Activated CD4-positive, alpha-beta T cell treated with anti-CD3 and anti-CD28 coated beads, Interleukin-2, amount 10 ng/mL, durations not matched to agents 24 days and 14 days (primary cell): ENCODE measurements at regions of chr7 and their contacts with region 1.

Region 1: DNA sequence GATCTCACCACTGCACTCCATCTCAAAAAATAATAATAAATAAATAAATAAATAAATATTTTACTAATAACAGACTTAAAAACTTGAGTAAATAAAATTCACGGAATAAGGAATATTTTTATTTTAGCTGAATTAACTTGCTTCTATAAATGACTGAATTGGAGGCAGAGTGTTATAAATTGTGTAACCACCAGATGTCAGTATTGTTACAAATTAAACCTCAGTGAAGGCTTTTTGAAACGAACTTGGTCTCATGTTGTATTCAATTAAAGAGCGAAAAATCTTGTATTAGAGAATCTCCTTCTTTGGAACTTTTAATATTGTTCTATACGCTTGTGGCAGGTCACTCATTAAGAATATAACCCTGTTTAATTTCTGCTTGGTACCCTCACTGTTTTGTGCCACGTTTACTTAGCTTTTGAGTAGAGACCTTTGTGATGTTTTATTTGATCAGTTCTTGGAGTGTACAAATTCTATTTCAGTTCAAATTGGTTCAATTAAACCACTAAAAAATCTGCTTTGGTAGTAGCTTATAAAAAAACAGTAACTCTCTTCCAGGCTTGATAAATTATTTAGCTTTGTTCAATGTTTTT is 45.6 kb upstream of the SCIN start:
- DNase-seq: no peak
- H3K4me3 Mint-ChIP-seq: no peak overlapping the region
- H3K27ac Mint-ChIP-seq: no peak overlapping the region
- H3K4me1 Mint-ChIP-seq: no peaks in the 10 kb centered on the region
- H3K27me3 Mint-ChIP-seq: peaks cover 14% of the 10 kb centered on the region

Region 2: DNA sequence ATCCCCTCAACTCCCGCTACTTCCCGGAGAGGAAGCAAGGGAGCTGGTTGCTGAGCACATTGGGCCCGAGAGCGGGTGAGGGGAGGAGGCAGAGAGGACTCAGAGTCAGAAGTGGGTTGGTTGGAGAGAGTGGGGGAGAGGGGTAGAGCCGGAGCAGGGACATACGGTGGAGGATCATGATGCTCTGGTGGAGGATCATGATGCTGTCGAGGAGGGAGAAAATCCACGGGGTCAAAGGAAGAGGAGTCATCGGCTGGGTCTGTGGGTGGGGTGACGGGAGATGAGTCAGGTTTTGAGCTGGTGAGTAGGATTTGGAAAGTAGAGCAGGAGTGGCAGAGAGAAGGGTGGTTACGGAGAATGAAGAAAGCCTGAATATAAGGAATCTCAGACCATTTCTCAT is 69.2 kb after region 1 on chr7:
- intact Hi-C with region 1: no loop called
- DNase-seq: no peak
- H3K4me3 Mint-ChIP-seq: no peak overlapping the region
- H3K27ac Mint-ChIP-seq: no peak overlapping the region
- H3K4me1 Mint-ChIP-seq: no peaks in the 10 kb centered on the region
- H3K27me3 Mint-ChIP-seq: peaks cover 2% of the 10 kb centered on the region

Region 3: DNA sequence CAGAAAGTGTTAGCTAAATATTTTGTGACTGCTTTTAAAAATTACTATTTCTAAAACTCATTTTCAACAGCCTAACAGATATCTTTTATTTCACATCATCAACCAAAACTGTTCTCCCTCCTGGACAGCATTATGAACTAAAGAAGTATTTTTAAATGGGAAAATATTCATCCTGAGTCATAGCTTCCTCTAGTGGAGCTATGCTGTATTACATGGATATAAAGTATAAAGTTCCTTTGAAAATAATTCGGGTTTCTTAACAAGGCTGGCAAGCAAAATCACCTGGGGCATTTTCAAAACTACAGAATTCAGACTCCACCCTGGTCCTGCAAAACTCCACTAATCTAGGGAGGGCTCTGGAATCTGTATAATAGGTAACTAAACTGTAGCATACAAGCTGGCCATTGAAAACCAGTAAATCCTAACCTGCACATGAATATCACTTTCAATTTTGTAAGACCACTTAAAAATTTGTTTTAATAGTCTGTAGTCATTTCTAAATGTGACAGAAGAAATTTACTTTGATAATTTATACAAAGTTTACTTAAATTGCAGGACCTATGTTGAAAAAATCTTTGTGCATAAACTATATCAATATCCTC is 99.1 kb after region 1 on chr7:
- intact Hi-C with region 1: loop called (anchors 1 kb)
- DNase-seq: no peak
- H3K4me3 Mint-ChIP-seq: no peak overlapping the region
- H3K27ac Mint-ChIP-seq: no peak overlapping the region
- H3K4me1 Mint-ChIP-seq: peaks cover 4% of the 10 kb centered on the region
- H3K27me3 Mint-ChIP-seq: peaks cover 17% of the 10 kb centered on the region

Region 4: DNA sequence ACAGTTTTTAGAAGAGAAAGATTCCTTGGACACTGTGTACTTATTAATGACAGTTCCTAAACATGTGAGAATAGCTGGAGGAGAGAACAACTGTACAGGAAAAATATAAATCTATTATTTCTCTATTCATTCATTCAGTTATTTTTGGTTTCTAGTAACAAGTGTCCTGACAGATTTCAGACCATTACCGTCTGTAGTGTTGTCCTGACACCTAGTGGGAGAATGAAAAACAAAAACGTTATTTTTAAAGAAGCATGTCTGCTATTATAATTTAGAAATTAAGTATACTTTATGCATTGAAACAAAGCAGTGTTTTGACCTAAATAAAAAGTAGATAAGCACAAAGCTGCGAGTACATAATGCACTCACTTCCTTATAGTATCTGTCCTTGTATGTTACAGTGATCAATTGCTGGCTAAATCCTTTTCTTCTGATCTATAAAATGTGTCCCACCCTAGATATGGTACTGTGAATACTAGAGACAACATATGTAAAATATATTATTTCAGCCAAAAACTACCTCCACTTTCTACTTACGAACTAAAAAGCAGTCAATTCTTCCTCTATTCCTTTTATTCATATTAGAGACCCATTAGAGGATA is 738.1 kb after region 1 on chr7:
- intact Hi-C with region 1: loop called (anchors 2 kb)
- DNase-seq: peak; percentile 57
- H3K4me3 Mint-ChIP-seq: no peak overlapping the region
- H3K27ac Mint-ChIP-seq: no peak overlapping the region
- H3K4me1 Mint-ChIP-seq: no peaks in the 10 kb centered on the region
- H3K27me3 Mint-ChIP-seq: no peaks in the 10 kb centered on the region